ENCODE measurements at regions of chr3 and their contacts with region 1.

Region 1: GRCh38 chr3:24773798-24774197 is 279.1 kb upstream of the THRB start:
- DNase-seq: peak; percentile 20 to 41
- ATAC-seq: peak; percentile 41 to 75 (median 60)
- H3K4me3 ChIP-seq: no peak overlapping the region
- H3K27ac ChIP-seq: no peak overlapping the region
- H3K4me1 ChIP-seq: no peaks in the 10 kb centered on the region
- H3K27me3 ChIP-seq: no peaks in the 10 kb centered on the region
- CTCF ChIP-seq: peak; percentile 57 to 86 (median 77)

Region 2: GRCh38 chr3:25033407-25034029 is 259.7 kb after region 1 on chr3:
- intact Hi-C with region 1: loop called in 1 of 10 experiments (anchors 10 kb)
- DNase-seq: peak; percentile 17 to 65
- ATAC-seq: peak; percentile 62 to 90 (median 74)
- H3K4me3 ChIP-seq: no peak overlapping the region
- H3K27ac ChIP-seq: no peak overlapping the region
- H3K4me1 ChIP-seq: peaks cover 0 to 27% (median 12%) of the 10 kb centered on the region in 9 donors
- H3K27me3 ChIP-seq: no peaks in the 10 kb centered on the region
- CTCF ChIP-seq: peak; percentile 49 to 73 (median 64)